Endothelial cell of umbilical vein (primary cell): ENCODE measurements at regions of chr5 and their contacts with region 1.

Region 1: GRCh38 chr5:169637085-169637548 is at the start of gene DOCK2:
- DNase-seq: no peak
- H3K4me3 ChIP-seq: peak within 1 kb of the TSS in 2 of 3 experiments; percentile 6 to 9
- H3K27ac ChIP-seq: no peak within 1 kb of the TSS
- H3K4me1 ChIP-seq: peaks cover 3% of the 10 kb centered on the region
- H3K27me3 ChIP-seq: no peaks in the 10 kb centered on the region
- CTCF ChIP-seq: no peak
- POLR2A ChIP-seq: no peak
- total RNA-seq, gene DOCK2: 0.62 and 4.8 TPM in 2 replicates

Region 2: DNA sequence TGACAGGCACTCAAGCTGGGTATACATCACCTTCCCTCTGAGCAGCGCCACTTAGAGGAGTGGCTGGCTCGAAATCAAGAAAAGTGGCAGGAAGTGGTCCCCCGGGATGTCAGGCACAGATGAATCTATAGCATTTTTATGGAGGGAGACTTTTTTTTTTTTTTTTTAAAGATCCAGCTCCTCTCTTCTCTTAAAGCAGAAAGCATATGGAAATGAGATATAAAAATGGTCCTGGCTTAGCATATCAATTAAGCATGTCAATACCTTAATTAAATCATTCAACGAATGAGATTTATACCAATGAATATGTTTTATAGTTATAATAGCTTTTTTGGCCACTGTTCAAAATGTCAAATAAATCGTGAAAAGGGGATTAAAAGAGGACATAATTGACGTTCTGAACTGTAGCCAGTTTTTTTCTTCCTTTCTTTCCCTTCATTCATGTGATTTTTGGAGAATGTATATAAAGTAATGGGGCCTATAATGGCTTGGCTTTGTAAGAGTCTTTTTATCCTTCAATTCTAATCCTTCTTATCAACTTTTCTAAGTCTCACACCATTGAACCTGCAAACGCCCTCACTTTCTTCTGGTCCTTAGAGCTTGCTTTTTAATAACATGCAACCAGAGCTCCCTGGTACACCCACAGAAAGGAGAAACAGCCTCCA is 738.7 kb before region 1 on chr5:
- CTCF ChIA-PET with region 1: no interaction called
- POLR2A ChIA-PET with region 1: no interaction called
- dilution Hi-C with region 1: no loop called
- intact Hi-C with region 1: no loop called
- DNase-seq: no peak
- H3K4me3 ChIP-seq: no peak overlapping the region
- H3K27ac ChIP-seq: no peak overlapping the region
- H3K4me1 ChIP-seq: no peaks in the 10 kb centered on the region
- H3K27me3 ChIP-seq: no peaks in the 10 kb centered on the region
- CTCF ChIP-seq: no peak
- POLR2A ChIP-seq: no peak

Region 3: GRCh38 chr5:169599451-169599850 is 37.7 kb before region 1 on chr5:
- CTCF ChIA-PET with region 1: no interaction called
- POLR2A ChIA-PET with region 1: no interaction called
- dilution Hi-C with region 1: no loop called
- intact Hi-C with region 1: loop called (anchors 2 kb)
- DNase-seq: no peak
- H3K4me3 ChIP-seq: no peak overlapping the region
- H3K27ac ChIP-seq: no peak overlapping the region
- H3K4me1 ChIP-seq: no peaks in the 10 kb centered on the region
- H3K27me3 ChIP-seq: no peaks in the 10 kb centered on the region
- CTCF ChIP-seq: no peak
- POLR2A ChIP-seq: no peak